ENCODE measurements at regions of chr12 and their contacts with region 1.

Region 1: DNA sequence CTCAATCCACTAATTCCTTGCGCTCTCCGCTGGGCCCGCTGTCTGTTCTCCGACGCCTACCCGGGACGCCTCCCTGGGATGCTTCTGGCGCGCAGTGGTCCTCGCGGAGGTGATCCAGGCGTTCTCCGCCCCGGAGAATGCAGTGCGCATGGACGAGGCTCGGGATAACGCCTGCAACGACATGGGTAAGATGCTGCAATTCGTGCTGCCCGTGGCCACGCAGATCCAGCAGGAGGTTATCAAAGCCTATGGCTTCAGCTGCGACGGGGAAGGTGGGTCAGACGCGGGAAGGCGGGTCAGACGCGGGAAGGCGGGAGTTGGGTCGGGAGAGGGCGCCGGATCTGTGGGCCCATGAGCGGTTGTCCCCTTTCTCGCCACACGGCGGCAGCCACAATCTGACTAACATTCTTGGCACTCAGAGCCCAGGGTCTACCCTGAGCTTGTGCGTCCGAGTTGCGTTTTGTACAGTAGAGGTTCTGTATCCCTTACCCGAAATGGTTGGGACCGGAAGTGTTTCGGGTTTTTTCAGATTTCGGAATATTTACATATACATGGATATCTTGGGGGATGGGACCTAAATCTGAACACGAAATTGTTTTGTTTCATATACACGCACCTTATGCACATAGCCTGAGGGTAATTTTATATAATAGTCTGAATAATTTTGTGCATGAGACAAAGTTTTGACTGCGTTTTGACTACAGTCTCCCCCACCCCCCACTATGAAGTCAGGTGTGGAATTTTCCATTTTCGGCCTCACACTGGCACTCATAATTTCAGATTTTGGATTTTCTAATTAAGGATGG is 762 bp downstream of the C12orf57 start:
- DNase-seq: peak; percentile 88
- H3K4me3 ChIP-seq: peak overlapping the region; percentile 79
- H3K27ac ChIP-seq: peak overlapping the region; percentile 94
- H3K27me3 ChIP-seq: no peaks in the 10 kb centered on the region
- CTCF ChIP-seq: peak; percentile 83

Region 2: GRCh38 chr12:6965026-6965661 is 20.6 kb after region 1 on chr12:
- CTCF ChIA-PET with region 1: interaction called, 19 read pairs
- POLR2A ChIA-PET with region 1: interaction called, 22 read pairs
- DNase-seq: peak; percentile 79
- H3K4me3 ChIP-seq: no peak overlapping the region
- H3K27ac ChIP-seq: peak overlapping the region; percentile 68
- H3K27me3 ChIP-seq: no peaks in the 10 kb centered on the region
- CTCF ChIP-seq: peak; percentile 85

Region 3: GRCh38 chr12:7101694-7102131 is 157.1 kb after region 1 on chr12:
- CTCF ChIA-PET with region 1: interaction called, 16 read pairs
- POLR2A ChIA-PET with region 1: no interaction called
- DNase-seq: no peak
- H3K4me3 ChIP-seq: no peak overlapping the region
- H3K27ac ChIP-seq: no peak overlapping the region
- H3K27me3 ChIP-seq: no peaks in the 10 kb centered on the region
- CTCF ChIP-seq: no peak

Region 4: GRCh38 chr12:7108796-7109571 is 164.4 kb after region 1 on chr12 and contains the start of gene C1RL:
- CTCF ChIA-PET with region 1: interaction called, 10 read pairs
- POLR2A ChIA-PET with region 1: interaction called, 15 read pairs
- DNase-seq: no peak
- H3K4me3 ChIP-seq: peak within 1 kb of the TSS; percentile 82
- H3K27ac ChIP-seq: peak within 1 kb of the TSS; percentile 96
- H3K27me3 ChIP-seq: no peaks in the 10 kb centered on the region
- CTCF ChIP-seq: peak; percentile 97
- polyA plus RNA-seq, gene C1RL: 45.3 and 58.7 TPM in 2 replicates

Measured in AG04450 (cell line).